ENCODE measurements at regions of chr6 and their contacts with region 1.

Region 1: GRCh38 chr6:150079604-150080003 is 10.7 kb upstream of the ULBP3 start:
- DNase-seq: no peak
- H3K4me3 ChIP-seq: no peak overlapping the region
- H3K27ac ChIP-seq: no peak overlapping the region
- H3K4me1 ChIP-seq: no peaks in the 10 kb centered on the region
- H3K27me3 ChIP-seq: peaks cover 0 to 15% (median 0%) of the 10 kb centered on the region in 4 donors
- CTCF ChIP-seq: no peak
- EP300 ChIP-seq: no peak
- POLR2A ChIP-seq: no peak

Region 2: GRCh38 chr6:150334790-150335783 is 255.5 kb after region 1 on chr6:
- intact Hi-C with region 1: loop called (anchors 1 kb)
- DNase-seq: no peak
- H3K4me3 ChIP-seq: no peak overlapping the region
- H3K27ac ChIP-seq: no peak overlapping the region
- H3K4me1 ChIP-seq: no peaks in the 10 kb centered on the region
- H3K27me3 ChIP-seq: peaks cover 0 to 4% (median 0%) of the 10 kb centered on the region in 4 donors
- CTCF ChIP-seq: peak; percentile 73 to 78 (median 74)
- EP300 ChIP-seq: no peak
- POLR2A ChIP-seq: no peak

Region 3: GRCh38 chr6:150395398-150396009 is 315.9 kb after region 1 on chr6:
- intact Hi-C with region 1: loop called (anchors 2 kb)
- DNase-seq: no peak
- H3K4me3 ChIP-seq: no peak overlapping the region
- H3K27ac ChIP-seq: no peak overlapping the region
- H3K4me1 ChIP-seq: no peaks in the 10 kb centered on the region
- H3K27me3 ChIP-seq: no peaks in the 10 kb centered on the region
- CTCF ChIP-seq: peak; percentile 47 to 65 (median 55)
- EP300 ChIP-seq: no peak
- POLR2A ChIP-seq: no peak